ENCODE measurements at regions of chr3 and their contacts with region 1.

Region 1: GRCh38 chr3:732326-732928 is 360.4 kb upstream of the CNTN6 start:
- DNase-seq: no peak
- ATAC-seq: no peak
- H3K4me3 ChIP-seq: no peak overlapping the region
- H3K27ac ChIP-seq: no peak overlapping the region
- H3K4me1 ChIP-seq: no peaks in the 10 kb centered on the region
- H3K27me3 ChIP-seq: no peaks in the 10 kb centered on the region
- CTCF ChIP-seq: no peak

Region 2: GRCh38 chr3:661356-661755 is 71.1 kb before region 1 on chr3:
- intact Hi-C with region 1: no loop called
- DNase-seq: no peak
- ATAC-seq: no peak
- H3K4me3 ChIP-seq: no peak overlapping the region
- H3K27ac ChIP-seq: no peak overlapping the region
- H3K4me1 ChIP-seq: no peaks in the 10 kb centered on the region
- H3K27me3 ChIP-seq: no peaks in the 10 kb centered on the region
- CTCF ChIP-seq: no peak

Region 3: DNA sequence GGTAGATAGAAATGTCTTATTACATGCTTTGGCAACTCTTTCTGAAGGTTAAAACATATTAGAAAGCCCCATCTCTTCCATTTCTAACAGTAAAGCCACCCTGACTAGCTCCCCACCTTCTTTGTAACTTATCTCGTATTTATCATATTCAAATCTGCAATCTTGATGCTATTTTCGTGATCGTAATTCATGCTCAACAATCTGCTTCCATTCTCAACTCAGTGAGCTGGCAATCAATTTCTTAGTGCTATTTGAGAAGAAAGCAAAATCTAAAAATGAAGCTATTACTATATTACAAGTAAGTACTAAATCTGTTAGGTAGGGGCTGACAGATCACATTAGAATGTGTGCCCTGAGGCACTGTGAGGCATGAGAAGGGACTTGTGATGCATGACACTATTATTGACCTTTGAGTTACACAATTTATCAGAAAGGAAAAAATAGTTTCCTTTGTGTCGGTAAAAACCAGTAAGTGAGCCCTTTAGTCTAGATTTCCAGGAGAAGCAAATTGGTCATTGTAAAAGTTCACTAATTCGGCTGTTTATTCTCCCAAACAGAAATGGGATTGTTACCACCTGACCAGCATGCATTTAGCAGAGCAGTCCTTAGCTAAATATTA is 19.3 kb before region 1 on chr3:
- intact Hi-C with region 1: loop called in 1 of 2 experiments (anchors 2 kb)
- DNase-seq: no peak
- ATAC-seq: no peak
- H3K4me3 ChIP-seq: no peak overlapping the region
- H3K27ac ChIP-seq: no peak overlapping the region
- H3K4me1 ChIP-seq: no peaks in the 10 kb centered on the region
- H3K27me3 ChIP-seq: no peaks in the 10 kb centered on the region
- CTCF ChIP-seq: no peak

Region 4: DNA sequence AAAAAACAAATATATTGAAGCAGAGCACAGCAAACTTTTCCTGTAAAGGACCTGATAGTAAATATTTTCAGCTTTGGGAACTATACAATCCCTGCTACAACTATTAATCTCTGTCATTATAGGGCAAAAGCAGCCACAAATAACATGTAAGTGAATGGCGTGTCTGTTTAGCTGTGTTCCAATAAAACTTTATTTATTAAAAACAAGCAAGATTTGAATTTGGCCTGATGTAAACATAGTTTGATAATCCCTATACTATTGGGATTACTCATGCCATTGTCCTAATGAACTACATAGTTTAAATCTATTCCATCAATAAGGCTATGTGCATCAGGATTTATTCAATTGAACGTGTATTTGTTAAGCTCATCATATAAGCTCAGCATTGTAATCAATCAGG is 73.6 kb after region 1 on chr3:
- intact Hi-C with region 1: no loop called
- DNase-seq: no peak
- ATAC-seq: no peak
- H3K4me3 ChIP-seq: no peak overlapping the region
- H3K27ac ChIP-seq: no peak overlapping the region
- H3K4me1 ChIP-seq: no peaks in the 10 kb centered on the region
- H3K27me3 ChIP-seq: no peaks in the 10 kb centered on the region
- CTCF ChIP-seq: no peak